ENCODE measurements at regions of chr5 and their contacts with region 1.

Region 1: DNA sequence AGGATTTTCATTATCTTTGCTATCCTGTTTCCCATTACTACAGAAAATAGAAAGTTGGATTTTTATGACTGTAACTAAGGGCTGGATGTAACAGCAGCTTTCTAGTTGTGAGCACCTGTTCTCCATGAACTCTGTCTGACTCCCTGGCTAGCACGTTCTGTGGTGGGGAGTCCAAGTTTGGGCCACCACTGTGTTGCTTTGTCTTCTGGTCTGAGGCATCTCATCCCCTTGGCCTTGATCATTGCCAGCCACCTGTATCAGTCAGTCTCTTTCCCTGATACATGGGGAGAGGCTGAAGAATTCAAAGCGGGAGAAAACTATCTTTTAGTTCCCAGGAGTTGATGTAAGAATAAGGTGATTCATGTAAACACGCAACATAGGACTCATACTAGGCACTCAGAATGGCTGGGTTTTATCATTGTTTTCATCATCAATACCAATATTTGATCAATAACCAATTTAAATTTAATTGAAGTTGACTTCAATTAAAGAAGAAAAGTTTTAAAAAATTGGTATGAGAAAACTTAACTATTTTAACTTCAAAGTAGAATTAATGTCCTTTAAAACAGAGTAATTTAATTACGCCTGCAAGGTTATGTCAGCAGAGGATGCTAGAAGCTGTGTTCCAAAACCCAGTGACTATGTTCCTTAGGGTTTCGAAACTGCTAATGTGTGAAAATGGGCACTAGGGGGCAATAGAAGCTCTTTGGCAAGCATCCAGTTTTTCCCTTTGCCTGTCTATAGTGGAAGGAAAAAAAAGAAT is 33.6 kb downstream of the WDR70 start:
- DNase-seq: peak; percentile 69 to 73
- H3K4me3 ChIP-seq: no peak overlapping the region
- H3K4me3 Mint-ChIP-seq: no peak overlapping the region
- H3K27ac Mint-ChIP-seq: no peak overlapping the region
- H3K4me1 ChIP-seq: 0 out of 2 replicates have a peak, but pooled peaks cover 3% of the 10 kb centered on the region
- H3K4me1 Mint-ChIP-seq: no peaks in the 10 kb centered on the region
- H3K27me3 ChIP-seq: no peaks in the 10 kb centered on the region
- H3K27me3 Mint-ChIP-seq: no peaks in the 10 kb centered on the region
- CTCF ChIP-seq: peak; percentile 93 to 95

Region 2: DNA sequence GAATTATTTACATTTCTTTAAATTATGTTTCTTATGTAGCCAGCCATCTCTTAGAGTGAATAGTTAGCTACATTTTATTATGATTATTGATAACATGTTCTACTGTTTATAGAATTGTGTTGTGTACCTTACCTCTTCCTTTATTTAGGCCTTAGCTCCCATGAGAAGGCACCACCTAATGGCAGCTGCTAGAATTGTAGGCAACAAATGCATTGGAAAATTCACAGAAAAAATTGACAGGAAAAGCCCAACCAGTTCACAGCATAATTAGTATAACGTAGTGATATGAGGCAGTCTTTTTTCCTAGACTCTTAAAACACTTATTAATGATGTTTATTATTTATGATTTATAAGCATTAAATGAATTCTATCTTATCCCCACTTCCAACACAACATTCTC is 142.2 kb after region 1 on chr5:
- CTCF ChIA-PET with region 1: interaction called, 3 read pairs
- POLR2A ChIA-PET with region 1: no interaction called
- intact Hi-C with region 1: loop called (anchors 2 kb)
- DNase-seq: peak in 1 of 2 experiments; percentile 5
- H3K4me3 ChIP-seq: no peak overlapping the region
- H3K4me3 Mint-ChIP-seq: no peak overlapping the region
- H3K27ac Mint-ChIP-seq: no peak overlapping the region
- H3K4me1 ChIP-seq: peaks cover 9% of the 10 kb centered on the region; the same call in 1 of the 2 replicates
- H3K4me1 Mint-ChIP-seq: peaks cover 10% of the 10 kb centered on the region
- H3K27me3 ChIP-seq: no peaks in the 10 kb centered on the region
- H3K27me3 Mint-ChIP-seq: no peaks in the 10 kb centered on the region
- CTCF ChIP-seq: peak; percentile 34 to 51

Region 3: GRCh38 chr5:37724395-37725125 is 311.9 kb after region 1 on chr5:
- CTCF ChIA-PET with region 1: interaction called, 3 read pairs
- POLR2A ChIA-PET with region 1: no interaction called
- intact Hi-C with region 1: loop called (anchors 5 kb)
- DNase-seq: no peak
- H3K4me3 ChIP-seq: no peak overlapping the region
- H3K4me3 Mint-ChIP-seq: no peak overlapping the region
- H3K27ac Mint-ChIP-seq: no peak overlapping the region
- H3K4me1 ChIP-seq: no peaks in the 10 kb centered on the region
- H3K4me1 Mint-ChIP-seq: no peaks in the 10 kb centered on the region
- H3K27me3 ChIP-seq: no peaks in the 10 kb centered on the region
- H3K27me3 Mint-ChIP-seq: no peaks in the 10 kb centered on the region
- CTCF ChIP-seq: no peak

Region 4: GRCh38 chr5:37756228-37756627 is 343.5 kb after region 1 on chr5:
- CTCF ChIA-PET with region 1: no interaction called
- POLR2A ChIA-PET with region 1: no interaction called
- intact Hi-C with region 1: loop called (anchors 1 kb)
- DNase-seq: peak in 1 of 2 experiments; percentile 6
- H3K4me3 ChIP-seq: no peak overlapping the region
- H3K4me3 Mint-ChIP-seq: no peak overlapping the region
- H3K27ac Mint-ChIP-seq: no peak overlapping the region
- H3K4me1 ChIP-seq: no peaks in the 10 kb centered on the region; the same call in 1 of the 2 replicates
- H3K4me1 Mint-ChIP-seq: no peaks in the 10 kb centered on the region
- H3K27me3 ChIP-seq: no peaks in the 10 kb centered on the region
- H3K27me3 Mint-ChIP-seq: no peaks in the 10 kb centered on the region
- CTCF ChIP-seq: no peak

Region 5: DNA sequence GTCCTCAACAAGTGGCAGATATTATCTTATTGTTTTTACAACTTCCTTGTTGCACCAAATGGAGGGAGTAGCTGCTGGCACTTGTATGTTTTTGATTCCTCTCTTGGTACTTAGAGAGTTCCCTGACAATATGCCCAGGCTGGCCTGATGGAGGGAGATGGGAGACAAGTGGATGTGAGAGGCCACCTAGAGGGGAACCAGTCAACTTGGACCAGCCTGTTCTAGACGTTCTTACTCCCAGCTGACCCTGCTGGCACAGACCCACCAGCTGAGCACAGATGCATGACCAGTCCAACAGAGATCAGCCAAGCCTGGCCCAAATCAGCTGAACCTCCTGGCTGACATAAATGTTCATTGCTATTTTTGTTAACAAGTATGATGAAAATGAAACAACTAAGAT is 488.0 kb after region 1 on chr5:
- CTCF ChIA-PET with region 1: interaction called, 7 read pairs
- POLR2A ChIA-PET with region 1: no interaction called
- intact Hi-C with region 1: loop called (anchors 1 kb)
- DNase-seq: peak in 1 of 2 experiments; percentile 27
- H3K4me3 ChIP-seq: no peak overlapping the region
- H3K4me3 Mint-ChIP-seq: no peak overlapping the region
- H3K27ac Mint-ChIP-seq: no peak overlapping the region
- H3K4me1 ChIP-seq: no peaks in the 10 kb centered on the region
- H3K4me1 Mint-ChIP-seq: no peaks in the 10 kb centered on the region
- H3K27me3 ChIP-seq: peaks cover 1% of the 10 kb centered on the region; the same call in 1 of the 2 replicates
- H3K27me3 Mint-ChIP-seq: peaks cover 3% of the 10 kb centered on the region
- CTCF ChIP-seq: peak in 1 of 2 experiments; percentile 36

Region 6: DNA sequence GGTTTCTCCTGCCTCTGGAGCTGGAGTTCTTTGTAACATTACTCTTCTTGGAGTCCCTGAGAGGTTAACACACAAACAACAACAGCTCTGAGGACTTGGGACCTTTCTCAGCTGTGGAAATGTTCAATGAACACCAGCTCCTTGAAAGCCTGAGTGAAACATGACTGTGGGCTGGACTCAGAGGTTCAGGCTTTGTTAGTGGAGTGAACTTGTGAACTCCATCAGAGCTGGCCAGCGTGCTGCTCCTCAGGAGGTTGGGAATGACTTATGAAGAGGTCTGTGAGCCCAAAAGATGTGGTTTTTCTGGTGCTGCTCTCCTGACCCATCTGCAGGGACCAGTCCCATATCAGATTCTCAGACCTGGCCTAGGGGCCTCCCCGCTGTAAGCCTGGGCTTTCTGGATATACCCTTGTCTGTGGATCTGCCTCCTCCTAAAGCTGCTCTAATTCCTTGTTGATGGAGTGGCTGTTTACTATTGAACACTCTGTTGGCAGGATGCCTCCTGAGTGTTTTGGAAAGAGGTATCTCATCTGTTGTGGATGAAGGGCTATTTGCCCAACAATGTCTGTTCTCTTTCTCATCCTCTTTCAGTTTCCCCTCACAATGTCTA is 597.2 kb after region 1 on chr5:
- CTCF ChIA-PET with region 1: no interaction called
- POLR2A ChIA-PET with region 1: no interaction called
- intact Hi-C with region 1: loop called (anchors 5 kb)
- DNase-seq: no peak
- H3K4me3 ChIP-seq: no peak overlapping the region
- H3K4me3 Mint-ChIP-seq: no peak overlapping the region
- H3K27ac Mint-ChIP-seq: no peak overlapping the region
- H3K4me1 ChIP-seq: no peaks in the 10 kb centered on the region
- H3K4me1 Mint-ChIP-seq: no peaks in the 10 kb centered on the region
- H3K27me3 ChIP-seq: no peaks in the 10 kb centered on the region
- H3K27me3 Mint-ChIP-seq: peaks cover 18% of the 10 kb centered on the region
- CTCF ChIP-seq: no peak

Region 7: DNA sequence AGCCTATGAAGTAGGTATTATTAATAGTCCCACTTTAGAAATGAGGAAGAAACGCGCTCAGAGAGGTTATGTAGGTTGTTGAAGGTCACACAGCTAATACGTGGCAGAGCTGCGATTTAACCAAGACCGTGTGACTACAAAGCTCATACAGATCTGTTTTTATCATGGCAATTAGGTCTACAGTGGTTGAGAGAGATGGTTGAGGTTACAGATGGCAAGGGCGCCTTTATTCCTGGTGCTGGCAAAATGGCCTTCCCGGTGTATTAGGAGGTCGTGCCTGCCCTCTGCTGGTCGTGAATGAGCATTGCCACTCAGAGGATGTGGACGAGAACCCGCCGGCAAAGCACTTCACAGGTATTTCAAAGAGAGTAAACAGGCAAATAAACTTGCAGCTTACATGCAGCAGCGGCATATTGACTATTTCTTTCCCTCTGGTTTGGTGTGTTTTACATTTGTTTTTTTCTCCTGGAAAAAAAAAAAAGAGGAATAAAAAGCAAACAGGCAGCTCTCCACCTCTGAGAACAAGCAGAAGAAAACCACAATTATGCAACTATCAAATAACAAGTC is 780.4 kb after region 1 on chr5:
- CTCF ChIA-PET with region 1: interaction called, 10 read pairs
- POLR2A ChIA-PET with region 1: no interaction called
- intact Hi-C with region 1: loop called (anchors 1 kb)
- DNase-seq: peak; percentile 64 to 71
- H3K4me3 ChIP-seq: no peak overlapping the region
- H3K4me3 Mint-ChIP-seq: no peak overlapping the region
- H3K27ac Mint-ChIP-seq: no peak overlapping the region
- H3K4me1 ChIP-seq: no peaks in the 10 kb centered on the region
- H3K4me1 Mint-ChIP-seq: no peaks in the 10 kb centered on the region
- H3K27me3 ChIP-seq: no peaks in the 10 kb centered on the region; the same call in 1 of the 2 replicates
- H3K27me3 Mint-ChIP-seq: peaks cover 10% of the 10 kb centered on the region
- CTCF ChIP-seq: peak; percentile 88 to 93